ENCODE measurements at regions of chr11 and their contacts with region 1.

Region 1: GRCh38 chr11:17864478-17864941 is 129.9 kb downstream of the KCNC1 start:
- DNase-seq: peak; percentile 53
- ATAC-seq: peak; percentile 89
- H3K4me3 Mint-ChIP-seq: no peak overlapping the region
- H3K27ac Mint-ChIP-seq: no peak overlapping the region
- H3K4me1 Mint-ChIP-seq: peaks cover 17% of the 10 kb centered on the region
- H3K27me3 Mint-ChIP-seq: no peaks in the 10 kb centered on the region
- CTCF ChIP-seq: peak; percentile 57

Region 2: DNA sequence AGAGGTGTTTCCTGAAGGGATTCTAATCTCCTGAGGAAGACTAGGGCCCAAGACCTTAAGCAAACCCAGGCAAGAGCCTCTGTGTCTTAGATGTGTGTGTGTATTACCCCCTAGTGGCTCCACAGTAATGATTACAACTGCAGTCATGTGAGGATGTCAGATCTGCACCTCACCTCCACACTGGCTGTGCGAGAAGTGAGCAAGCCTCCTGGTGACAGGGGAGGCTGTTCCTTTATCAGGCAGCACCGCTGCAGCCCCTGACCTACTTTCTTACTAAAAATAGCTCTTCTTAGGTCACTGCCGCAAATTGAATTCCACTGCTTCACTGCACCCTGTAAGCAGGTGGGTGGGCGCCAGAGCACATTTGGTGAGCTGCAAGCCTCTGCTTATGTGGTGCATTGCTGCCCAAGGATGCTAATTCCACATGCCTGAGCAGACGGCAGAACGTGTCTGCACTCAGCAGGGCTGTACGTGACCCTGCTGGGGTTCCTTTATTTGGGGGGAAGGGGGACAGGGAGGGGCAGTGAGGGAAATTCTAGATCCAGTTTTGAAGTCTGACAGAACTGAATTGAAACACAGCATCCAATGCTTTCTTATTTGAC is 17.6 kb before region 1 on chr11:
- CTCF ChIA-PET with region 1: interaction called, 17 read pairs
- POLR2A ChIA-PET with region 1: no interaction called
- DNase-seq: peak; percentile 14
- ATAC-seq: peak; percentile 74
- H3K4me3 Mint-ChIP-seq: no peak overlapping the region
- H3K27ac Mint-ChIP-seq: no peak overlapping the region
- H3K4me1 Mint-ChIP-seq: no peaks in the 10 kb centered on the region; the same call in 1 of the 2 replicates
- H3K27me3 Mint-ChIP-seq: no peaks in the 10 kb centered on the region
- CTCF ChIP-seq: no peak

Region 3: DNA sequence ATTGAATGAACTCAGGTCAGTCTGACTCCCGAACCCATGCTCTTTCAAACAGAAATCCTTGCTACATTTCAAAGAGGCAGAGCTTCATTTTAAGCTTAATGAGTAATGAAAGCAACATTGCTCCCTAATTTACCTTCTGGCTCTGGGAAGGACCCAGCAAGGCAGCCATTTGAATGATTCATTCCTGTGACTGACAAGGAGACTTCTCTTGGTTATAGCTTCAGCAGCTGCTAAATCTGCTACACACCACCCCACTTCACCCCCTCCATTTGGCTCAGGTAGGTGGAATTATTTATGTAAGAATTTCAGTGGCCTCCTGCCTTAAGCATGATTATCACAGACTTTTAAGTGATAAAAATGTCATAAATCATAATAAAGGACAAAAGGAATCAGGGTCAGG is 12.3 kb before region 1 on chr11:
- CTCF ChIA-PET with region 1: interaction called, 17 read pairs
- POLR2A ChIA-PET with region 1: no interaction called
- DNase-seq: no peak
- ATAC-seq: no peak
- H3K4me3 Mint-ChIP-seq: no peak overlapping the region
- H3K27ac Mint-ChIP-seq: no peak overlapping the region
- H3K4me1 Mint-ChIP-seq: no peaks in the 10 kb centered on the region
- H3K27me3 Mint-ChIP-seq: no peaks in the 10 kb centered on the region
- CTCF ChIP-seq: no peak

Region 4: DNA sequence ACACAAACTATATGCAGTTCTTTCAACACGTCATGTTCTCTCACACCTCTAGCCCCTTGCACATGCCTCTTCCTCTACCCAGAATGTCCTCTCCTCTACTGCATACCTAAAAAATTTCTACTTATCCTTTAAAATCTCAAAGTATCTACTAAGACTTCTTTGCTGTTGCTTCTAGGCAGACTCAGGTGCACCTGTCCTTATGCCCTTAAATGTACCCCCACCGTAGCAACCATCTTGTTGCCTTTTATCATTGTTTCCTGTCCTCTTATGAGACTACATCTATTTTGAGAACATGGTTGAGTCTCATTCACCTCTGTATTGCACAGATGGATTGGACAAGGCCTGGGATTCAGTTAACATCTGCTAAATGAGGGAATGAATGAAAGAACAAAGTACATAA is 14.2 kb after region 1 on chr11:
- CTCF ChIA-PET with region 1: interaction called, 45 read pairs
- POLR2A ChIA-PET with region 1: no interaction called
- DNase-seq: no peak
- ATAC-seq: no peak
- H3K4me3 Mint-ChIP-seq: no peak overlapping the region
- H3K27ac Mint-ChIP-seq: no peak overlapping the region
- H3K4me1 Mint-ChIP-seq: peaks cover 12% of the 10 kb centered on the region
- H3K27me3 Mint-ChIP-seq: no peaks in the 10 kb centered on the region
- CTCF ChIP-seq: no peak

Region 5: GRCh38 chr11:17890325-17890724 is 25.8 kb after region 1 on chr11:
- CTCF ChIA-PET with region 1: interaction called, 13 read pairs
- POLR2A ChIA-PET with region 1: no interaction called
- DNase-seq: no peak
- ATAC-seq: peak; percentile 34; the same call in 1 of the 2 replicates
- H3K4me3 Mint-ChIP-seq: no peak overlapping the region
- H3K27ac Mint-ChIP-seq: no peak overlapping the region
- H3K4me1 Mint-ChIP-seq: peaks cover 17% of the 10 kb centered on the region
- H3K27me3 Mint-ChIP-seq: no peaks in the 10 kb centered on the region
- CTCF ChIP-seq: no peak